ENCODE measurements at regions of chr19 and their contacts with region 1.

Region 1: GRCh38 chr19:41484822-41485221 is 41.9 kb downstream of the ERICH4 start:
- DNase-seq: no peak
- H3K4me3 ChIP-seq: no peak overlapping the region
- H3K27ac ChIP-seq: no peak overlapping the region
- H3K4me1 ChIP-seq: no peaks in the 10 kb centered on the region
- H3K27me3 ChIP-seq: peaks cover 31% of the 10 kb centered on the region
- CTCF ChIP-seq: no peak
- EP300 ChIP-seq: no peak
- POLR2A ChIP-seq: no peak

Region 2: GRCh38 chr19:41439441-41440222 is 45.2 kb before region 1 on chr19 and contains the start of gene DMAC2:
- in situ Hi-C with region 1: no loop called
- intact Hi-C with region 1: no loop called
- DNase-seq: peak; percentile 99
- H3K4me3 ChIP-seq: peak within 1 kb of the TSS; percentile 64 to 88 (median 80)
- H3K27ac ChIP-seq: peak within 1 kb of the TSS; percentile 94 to 99 (median 97)
- H3K4me1 ChIP-seq: peaks cover 0 to 20% (median 5%) of the 10 kb centered on the region in 4 donors
- H3K27me3 ChIP-seq: no peaks in the 10 kb centered on the region
- CTCF ChIP-seq: peak; percentile 37 to 57 (median 41)
- EP300 ChIP-seq: no peak
- POLR2A ChIP-seq: peak; percentile 82
- total RNA-seq, gene DMAC2: 15.9 to 65.8 (median 50.1) TPM

Region 3: GRCh38 chr19:41457241-41457640 is 27.6 kb before region 1 on chr19:
- in situ Hi-C with region 1: no loop called
- intact Hi-C with region 1: no loop called
- DNase-seq: no peak
- H3K4me3 ChIP-seq: no peak overlapping the region
- H3K27ac ChIP-seq: no peak overlapping the region
- H3K4me1 ChIP-seq: peaks cover 0 to 4% (median 0%) of the 10 kb centered on the region in 4 donors
- H3K27me3 ChIP-seq: peaks cover 23% of the 10 kb centered on the region
- CTCF ChIP-seq: no peak
- EP300 ChIP-seq: no peak
- POLR2A ChIP-seq: no peak

Region 4: GRCh38 chr19:41993612-41994483 is 509.0 kb after region 1 on chr19 and contains the start of gene ATP1A3:
- in situ Hi-C with region 1: no loop called
- intact Hi-C with region 1: loop called (anchors 5 kb)
- DNase-seq: peak; percentile 52
- H3K4me3 ChIP-seq: peak within 1 kb of the TSS; percentile 3 to 47 (median 36)
- H3K27ac ChIP-seq: no peak within 1 kb of the TSS
- H3K4me1 ChIP-seq: peaks cover 5 to 23% (median 14%) of the 10 kb centered on the region in 4 donors
- H3K27me3 ChIP-seq: peaks cover 85% of the 10 kb centered on the region
- CTCF ChIP-seq: no peak
- EP300 ChIP-seq: no peak
- POLR2A ChIP-seq: no peak
- total RNA-seq, gene ATP1A3: 0.20 to 1.1 (median 1.1) TPM in 3 of 4 donors, not detected in the other

Measured in transverse colon (tissue), 4 donors.